ENCODE measurements at regions of chr3 and their contacts with region 1.

Region 1: GRCh38 chr3:181252631-181253030 is 263.1 kb upstream of the DNAJC19 start:
- DNase-seq: peak; percentile 46
- H3K4me3 ChIP-seq: no peak overlapping the region
- H3K27ac ChIP-seq: no peak overlapping the region
- H3K4me1 ChIP-seq: no peaks in the 10 kb centered on the region
- H3K27me3 ChIP-seq: peaks cover 26% of the 10 kb centered on the region
- CTCF ChIP-seq: no peak

Region 2: GRCh38 chr3:180870008-180870699 is 382.5 kb before region 1 on chr3:
- CTCF ChIA-PET with region 1: no interaction called
- POLR2A ChIA-PET with region 1: interaction called, 15 read pairs
- intact Hi-C with region 1: no loop called
- DNase-seq: no peak
- H3K4me3 ChIP-seq: no peak overlapping the region
- H3K27ac ChIP-seq: no peak overlapping the region
- H3K4me1 ChIP-seq: no peaks in the 10 kb centered on the region
- H3K27me3 ChIP-seq: peaks cover 14% of the 10 kb centered on the region
- CTCF ChIP-seq: no peak

Region 3: GRCh38 chr3:181025204-181025603 is 227.4 kb before region 1 on chr3:
- CTCF ChIA-PET with region 1: no interaction called
- POLR2A ChIA-PET with region 1: interaction called, 13 read pairs
- intact Hi-C with region 1: no loop called
- DNase-seq: no peak
- H3K4me3 ChIP-seq: no peak overlapping the region
- H3K27ac ChIP-seq: no peak overlapping the region
- H3K4me1 ChIP-seq: no peaks in the 10 kb centered on the region
- H3K27me3 ChIP-seq: no peaks in the 10 kb centered on the region
- CTCF ChIP-seq: no peak

Region 4: DNA sequence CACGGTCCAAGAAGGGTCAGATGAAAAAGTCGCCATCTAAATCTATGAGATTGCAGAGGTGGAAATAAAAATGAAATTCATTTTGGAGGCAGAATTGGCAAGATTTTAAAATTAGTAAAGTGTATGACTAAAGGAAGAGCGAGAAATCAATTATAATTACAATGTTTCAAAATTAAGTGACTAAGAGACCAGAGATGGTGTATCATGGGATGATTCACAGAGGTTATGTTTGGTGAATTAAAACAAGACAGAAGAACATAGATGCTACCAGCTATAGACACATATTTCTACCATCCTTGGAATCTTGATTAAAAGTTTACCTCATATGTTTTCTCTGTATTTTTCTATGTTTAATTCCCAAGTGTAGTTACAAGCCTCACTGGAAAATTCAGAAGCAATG is 45.8 kb after region 1 on chr3:
- CTCF ChIA-PET with region 1: no interaction called
- POLR2A ChIA-PET with region 1: interaction called, 10 read pairs
- intact Hi-C with region 1: no loop called
- DNase-seq: no peak
- H3K4me3 ChIP-seq: no peak overlapping the region
- H3K27ac ChIP-seq: no peak overlapping the region
- H3K4me1 ChIP-seq: no peaks in the 10 kb centered on the region
- H3K27me3 ChIP-seq: peaks cover 53% of the 10 kb centered on the region
- CTCF ChIP-seq: no peak

Measured in A673 (cell line).